Mammary epithelial cell (primary cell): ENCODE measurements at regions of chr14 and their contacts with region 1.

Region 1: DNA sequence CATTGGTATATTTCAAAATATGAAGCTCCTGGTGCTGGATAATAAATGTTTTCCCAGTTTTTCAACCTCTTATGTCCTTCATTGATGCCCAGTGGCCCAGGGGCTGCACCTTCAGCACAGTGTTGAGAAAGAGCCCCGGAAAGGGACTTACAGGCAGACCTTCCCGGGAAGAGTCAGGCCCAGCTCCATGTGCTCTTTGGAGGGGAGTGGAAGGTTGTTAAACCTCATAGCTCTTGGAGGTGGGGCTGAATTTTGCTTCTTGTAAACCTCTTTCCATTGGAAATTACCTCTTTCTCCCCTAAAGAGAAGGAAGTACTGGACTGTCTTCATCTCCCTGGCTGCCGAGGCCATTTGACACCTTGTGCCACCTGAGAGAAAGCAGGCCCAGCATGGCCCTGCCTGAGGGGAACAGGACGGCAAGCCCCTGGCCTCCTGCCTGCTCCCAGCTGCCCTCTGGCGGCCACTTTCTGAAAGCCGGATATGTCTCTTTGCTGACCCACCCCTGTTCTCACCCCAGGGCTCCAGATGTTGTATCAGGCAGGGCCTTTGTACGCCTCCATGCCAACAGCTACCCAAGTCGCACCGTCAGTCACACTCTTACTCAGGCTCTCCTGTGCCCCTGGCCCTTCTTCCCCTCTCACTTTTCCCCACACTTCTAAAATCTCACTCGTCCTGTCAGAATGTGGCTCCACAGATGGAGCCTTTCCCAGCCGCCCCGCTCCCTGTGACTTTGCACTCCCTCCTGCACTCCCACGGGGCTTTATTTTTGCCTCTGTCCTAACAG is 43.0 kb downstream of the EVL start:
- DNase-seq: peak; percentile 58
- H3K4me3 ChIP-seq: no peak overlapping the region
- H3K27ac ChIP-seq: peak overlapping the region; percentile 55
- H3K4me1 ChIP-seq: peaks cover 27% of the 10 kb centered on the region
- H3K27me3 ChIP-seq: no peaks in the 10 kb centered on the region
- CTCF ChIP-seq: peak; percentile 75 to 96

Region 2: GRCh38 chr14:99793213-99794150 is 314.8 kb before region 1 on chr14 and contains the start of gene EML1:
- CTCF ChIA-PET with region 1: no interaction called
- dilution Hi-C with region 1: no loop called
- in situ Hi-C with region 1: no loop called
- intact Hi-C with region 1: no loop called
- DNase-seq: peak; percentile 52
- H3K4me3 ChIP-seq: peak within 1 kb of the TSS; percentile 44 to 59 (median 50)
- H3K27ac ChIP-seq: no peak within 1 kb of the TSS
- H3K4me1 ChIP-seq: peaks cover 4% of the 10 kb centered on the region
- H3K27me3 ChIP-seq: peaks cover 12% of the 10 kb centered on the region
- CTCF ChIP-seq: no peak
- total RNA-seq, gene EML1: 2.8 to 4.2 TPM

Region 3: DNA sequence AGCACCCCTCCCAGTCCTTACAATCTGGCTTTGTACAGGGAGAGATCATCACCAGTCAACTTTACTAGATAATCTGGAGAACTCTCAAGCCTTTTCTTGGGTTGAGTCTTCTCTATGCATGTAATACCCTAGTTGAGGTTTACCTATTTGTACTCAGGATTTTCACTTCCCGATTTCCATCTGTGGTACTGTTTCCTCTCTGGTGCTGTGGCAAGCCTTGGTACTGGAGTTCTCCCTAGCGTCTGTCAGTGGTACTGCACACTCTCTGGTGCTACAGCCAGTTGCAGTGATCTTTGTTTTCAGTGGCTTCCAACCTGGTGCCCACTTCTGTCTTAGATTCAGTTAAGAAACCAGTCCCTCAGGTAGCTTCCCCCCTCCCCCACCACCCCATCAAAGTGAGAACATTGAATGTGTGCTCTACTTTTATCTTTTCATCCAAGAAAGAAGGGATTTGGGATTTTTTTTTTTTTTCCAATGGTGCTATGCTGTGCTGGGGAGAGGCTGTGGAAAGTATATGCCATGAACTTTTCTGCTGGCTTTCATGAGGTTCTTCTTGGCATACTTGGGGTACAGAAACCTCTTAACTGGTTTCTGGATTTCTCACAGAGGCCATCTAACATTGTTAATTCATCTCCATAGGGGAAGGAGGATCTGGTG is 112.4 kb before region 1 on chr14:
- CTCF ChIA-PET with region 1: no interaction called
- dilution Hi-C with region 1: no loop called
- in situ Hi-C with region 1: no loop called
- intact Hi-C with region 1: loop called (anchors 5 kb)
- DNase-seq: peak; percentile 49
- H3K4me3 ChIP-seq: no peak overlapping the region
- H3K27ac ChIP-seq: no peak overlapping the region
- H3K4me1 ChIP-seq: peaks cover 18% of the 10 kb centered on the region
- H3K27me3 ChIP-seq: no peaks in the 10 kb centered on the region
- CTCF ChIP-seq: peak; percentile 87

Region 4: DNA sequence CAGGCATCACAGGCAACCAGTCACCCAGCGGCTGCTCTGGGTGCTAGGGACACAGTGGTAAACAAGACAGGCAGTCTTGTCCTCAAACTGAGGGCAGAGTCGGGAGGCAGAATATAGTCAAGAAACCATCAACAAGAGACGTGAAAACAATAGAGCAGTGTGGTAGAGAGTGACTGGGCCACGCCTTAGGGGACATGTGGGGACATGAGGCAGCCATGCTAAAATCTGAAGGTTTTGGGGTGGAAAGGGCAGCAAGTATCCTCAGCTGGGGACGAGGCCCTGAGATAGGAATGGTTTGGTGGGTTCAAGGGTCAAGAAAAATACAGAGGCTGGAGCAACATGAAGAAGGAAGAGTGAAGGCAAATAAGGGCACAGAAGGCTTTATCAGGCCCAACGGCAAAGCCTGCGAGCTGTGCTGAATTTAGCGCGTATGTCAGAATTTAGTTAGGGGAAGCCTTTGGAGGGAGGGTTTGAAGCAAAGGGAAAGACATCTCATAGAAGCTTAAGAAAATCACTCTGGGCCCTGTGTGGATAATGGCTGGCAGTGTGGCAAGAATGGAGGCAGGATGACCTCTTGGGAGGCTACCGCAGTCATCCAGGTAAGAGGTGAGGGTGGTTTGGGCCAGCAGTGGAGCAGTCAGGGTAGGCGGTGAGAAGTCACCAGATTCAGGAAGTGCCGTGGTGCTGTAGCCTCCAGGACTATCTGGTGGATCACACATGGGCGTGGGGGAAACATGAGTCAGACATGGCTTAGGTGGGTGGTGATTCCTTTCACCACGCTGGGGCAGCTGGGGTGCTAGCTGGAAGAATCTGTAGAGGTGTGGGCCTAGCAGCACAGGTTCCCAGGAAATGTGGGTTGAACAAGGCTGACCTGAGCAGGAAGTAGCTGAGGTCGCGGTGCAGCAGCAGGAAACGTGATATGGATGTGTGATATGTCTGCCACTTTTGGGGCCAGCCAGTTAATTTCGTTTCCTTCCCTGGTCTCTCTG is 40.0 kb before region 1 on chr14:
- CTCF ChIA-PET with region 1: interaction called, 8 read pairs
- dilution Hi-C with region 1: loop called (anchors 5 kb)
- in situ Hi-C with region 1: loop called in 1 of 2 experiments (anchors 5 kb)
- intact Hi-C with region 1: loop called (anchors 1 kb)
- DNase-seq: peak; percentile 79
- H3K4me3 ChIP-seq: no peak overlapping the region
- H3K27ac ChIP-seq: peak overlapping the region; percentile 37
- H3K4me1 ChIP-seq: peaks cover 26% of the 10 kb centered on the region
- H3K27me3 ChIP-seq: no peaks in the 10 kb centered on the region
- CTCF ChIP-seq: no peak

Region 5: DNA sequence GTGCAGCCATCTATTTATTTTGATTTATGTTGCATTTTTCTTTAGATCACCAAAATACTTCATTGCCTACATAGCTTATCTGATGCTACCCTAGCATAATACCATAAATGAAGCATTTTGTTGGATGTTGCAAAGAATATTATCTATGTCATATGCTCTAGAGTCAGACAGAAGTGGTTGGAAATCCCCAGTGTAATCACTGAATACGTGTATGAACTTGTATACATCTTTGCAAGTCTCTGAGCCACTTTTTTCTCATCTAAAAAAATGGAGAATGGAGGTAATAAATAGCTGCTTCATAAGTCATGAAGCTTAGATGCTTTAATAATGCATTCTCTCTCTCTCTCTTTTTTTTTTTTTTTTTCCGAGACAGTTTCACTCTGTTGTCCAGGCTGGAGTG is 24.5 kb before region 1 on chr14:
- CTCF ChIA-PET with region 1: interaction called, 14 read pairs
- dilution Hi-C with region 1: no loop called
- in situ Hi-C with region 1: no loop called
- intact Hi-C with region 1: no loop called
- DNase-seq: peak; percentile 95
- H3K4me3 ChIP-seq: no peak overlapping the region
- H3K27ac ChIP-seq: peak overlapping the region; percentile 62
- H3K4me1 ChIP-seq: peaks cover 29% of the 10 kb centered on the region
- H3K27me3 ChIP-seq: no peaks in the 10 kb centered on the region
- CTCF ChIP-seq: no peak

Region 6: GRCh38 chr14:100149851-100150611 is 41.8 kb after region 1 on chr14:
- CTCF ChIA-PET with region 1: no interaction called
- dilution Hi-C with region 1: no loop called
- in situ Hi-C with region 1: no loop called
- intact Hi-C with region 1: loop called (anchors 2 kb)
- DNase-seq: no peak
- H3K4me3 ChIP-seq: no peak overlapping the region
- H3K27ac ChIP-seq: no peak overlapping the region
- H3K4me1 ChIP-seq: peaks cover 21% of the 10 kb centered on the region
- H3K27me3 ChIP-seq: no peaks in the 10 kb centered on the region
- CTCF ChIP-seq: no peak